HepG2 (cell line): ENCODE measurements at regions of chr10 and their contacts with region 1.

Region 1: GRCh38 chr10:60883187-60883586 is 60.8 kb downstream of the RHOBTB1 start:
- DNase-seq: peak; percentile 43
- ATAC-seq: peak; percentile 98
- H3K4me3 ChIP-seq: no peak overlapping the region
- H3K27ac ChIP-seq: no peak overlapping the region
- H3K4me1 ChIP-seq: no peaks in the 10 kb centered on the region
- H3K27me3 ChIP-seq: no peaks in the 10 kb centered on the region
- CTCF ChIP-seq: peak; percentile 62
- EP300 ChIP-seq: no peak
- POLR2A ChIP-seq: no peak
- RAD21 ChIP-seq: no peak

Region 2: GRCh38 chr10:60964257-60965235 is 81.4 kb after region 1 on chr10:
- CTCF ChIA-PET with region 1: interaction called, 8 read pairs
- POLR2A ChIA-PET with region 1: no interaction called
- in situ Hi-C with region 1: no loop called
- intact Hi-C with region 1: loop called (anchors 1 kb)
- DNase-seq: peak; percentile 63
- ATAC-seq: peak; percentile 56; the same call in 2 of the 3 replicates
- H3K4me3 ChIP-seq: no peak overlapping the region
- H3K27ac ChIP-seq: no peak overlapping the region
- H3K4me1 ChIP-seq: peaks cover 44% of the 10 kb centered on the region
- H3K27me3 ChIP-seq: no peaks in the 10 kb centered on the region
- CTCF ChIP-seq: peak; percentile 74
- EP300 ChIP-seq: no peak
- POLR2A ChIP-seq: no peak
- RAD21 ChIP-seq: peak; percentile 59